ENCODE measurements at regions of chr3 and their contacts with region 1.

Region 1: GRCh38 chr3:9352917-9353752 is 9.7 kb upstream of the THUMPD3 start:
- DNase-seq: peak; percentile 76
- ATAC-seq: peak; percentile 47
- H3K4me3 Mint-ChIP-seq: no peak overlapping the region
- H3K27ac Mint-ChIP-seq: peak overlapping the region; percentile 24
- H3K4me1 Mint-ChIP-seq: peaks cover 24% of the 10 kb centered on the region
- H3K27me3 Mint-ChIP-seq: no peaks in the 10 kb centered on the region

Region 2: DNA sequence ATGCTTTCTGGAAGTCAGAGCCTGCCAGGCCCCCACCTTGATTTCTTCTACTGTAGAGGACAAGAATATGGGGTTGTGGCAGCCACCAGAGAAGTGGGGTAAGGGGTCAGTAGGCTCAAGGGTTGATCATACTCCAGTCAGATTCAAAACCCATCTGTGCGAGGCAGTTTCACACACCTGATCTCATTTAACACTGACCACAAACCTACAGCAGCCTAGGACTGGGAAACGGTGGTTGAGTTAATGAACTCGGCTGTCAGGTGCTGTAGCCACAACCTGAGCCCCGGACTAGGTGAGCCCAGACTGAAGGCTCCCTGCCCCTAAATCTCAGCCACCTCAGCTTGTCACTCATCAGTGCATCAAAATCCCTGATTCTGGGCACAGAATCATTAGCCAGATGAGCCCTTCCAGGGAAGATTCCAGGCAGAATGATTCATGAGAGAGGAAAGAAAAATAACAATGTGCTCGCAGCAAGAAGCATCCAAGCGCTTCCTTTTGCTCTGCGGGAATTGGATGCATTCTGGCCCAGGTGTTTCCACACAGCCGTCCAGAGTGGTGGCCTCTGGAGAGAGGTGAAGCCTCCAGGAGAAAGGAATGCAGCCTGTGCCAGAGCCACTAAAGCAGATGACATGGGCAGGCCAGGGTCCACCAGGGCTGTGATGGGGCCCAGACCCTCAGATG is 205.8 kb before region 1 on chr3:
- CTCF ChIA-PET with region 1: no interaction called
- POLR2A ChIA-PET with region 1: no interaction called
- intact Hi-C with region 1: no loop called
- DNase-seq: no peak
- ATAC-seq: no peak
- H3K4me3 Mint-ChIP-seq: no peak overlapping the region
- H3K27ac Mint-ChIP-seq: no peak overlapping the region
- H3K4me1 Mint-ChIP-seq: no peaks in the 10 kb centered on the region
- H3K27me3 Mint-ChIP-seq: no peaks in the 10 kb centered on the region

Region 3: GRCh38 chr3:9503283-9503682 is 150.1 kb after region 1 on chr3:
- CTCF ChIA-PET with region 1: no interaction called
- POLR2A ChIA-PET with region 1: no interaction called
- intact Hi-C with region 1: loop called in 1 of 2 experiments (anchors 1 kb)
- DNase-seq: peak; percentile 84
- ATAC-seq: peak; percentile 67
- H3K4me3 Mint-ChIP-seq: no peak overlapping the region
- H3K27ac Mint-ChIP-seq: no peak overlapping the region
- H3K4me1 Mint-ChIP-seq: peaks cover 5% of the 10 kb centered on the region
- H3K27me3 Mint-ChIP-seq: peaks cover 22% of the 10 kb centered on the region